Activated CD4-positive, alpha-beta memory T cell treated with anti-CD3 and anti-CD28 coated beads, Interleukin-2, amount 10 ng/mL, durations not matched to agents 7 days and 5 days (primary cell): ENCODE measurements at regions of chr11 and their contacts with region 1.

Region 1: DNA sequence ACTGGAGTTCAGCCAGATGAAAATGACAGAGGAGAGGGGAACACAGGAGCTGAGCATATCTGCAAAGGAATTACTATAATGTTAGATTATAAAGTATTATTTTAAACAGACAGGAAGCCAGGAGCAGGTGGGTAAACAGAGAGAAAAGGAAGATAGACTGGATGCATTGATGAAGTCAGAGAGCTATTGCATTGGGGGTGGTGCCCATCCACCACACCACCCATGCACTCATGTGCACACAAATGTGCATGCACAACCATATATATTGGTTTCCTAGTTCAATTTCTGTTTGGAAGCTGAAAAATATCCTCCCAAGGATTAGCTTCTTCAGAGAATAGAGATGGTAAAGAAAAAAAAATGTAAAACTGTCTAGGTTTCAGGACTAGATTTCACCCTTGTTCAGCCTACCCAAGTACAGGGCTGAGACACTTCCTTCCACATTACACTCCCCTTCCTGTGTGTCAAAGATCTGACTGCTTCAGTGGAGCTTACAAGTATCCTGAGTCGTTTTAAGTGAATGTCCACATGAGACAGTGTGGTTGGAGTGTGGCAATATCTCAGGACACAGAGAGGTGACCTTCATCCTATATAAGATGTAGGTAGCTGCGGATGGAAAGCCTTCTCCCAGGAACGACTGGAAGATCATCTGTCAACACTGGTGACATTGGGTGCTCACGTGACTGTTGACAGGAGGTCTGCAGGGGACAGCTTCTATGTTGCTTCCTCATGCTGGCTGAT is 12.2 kb upstream of the SMPD1 start:
- DNase-seq: peak; percentile 34
- H3K4me3 Mint-ChIP-seq: peak overlapping the region; percentile 24
- H3K27ac Mint-ChIP-seq: peak overlapping the region; percentile 87
- H3K4me1 Mint-ChIP-seq: peaks cover 35% of the 10 kb centered on the region
- H3K27me3 Mint-ChIP-seq: no peaks in the 10 kb centered on the region

Region 2: DNA sequence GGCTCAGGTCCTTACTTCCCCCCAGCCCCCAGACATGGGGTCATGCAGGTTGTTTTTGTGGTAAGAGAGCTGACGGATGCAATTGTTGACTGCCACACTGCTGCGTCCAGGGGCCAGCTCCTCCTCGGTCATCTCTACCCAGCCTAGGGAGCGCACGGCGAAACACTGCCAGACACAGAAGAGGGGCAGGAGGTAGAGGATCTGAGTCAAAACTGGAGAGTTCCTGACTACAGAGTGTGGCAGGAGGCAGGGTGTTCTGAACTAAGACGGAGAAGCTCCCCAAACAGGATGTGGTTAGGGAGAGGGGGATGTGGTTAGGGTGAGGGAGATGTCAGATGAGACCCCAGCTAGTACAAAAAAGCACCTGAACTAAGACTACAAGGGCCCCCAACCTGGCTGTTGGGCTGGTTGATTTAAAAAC is 24.5 kb after region 1 on chr11:
- CTCF ChIA-PET with region 1: interaction called, 23 read pairs
- POLR2A ChIA-PET with region 1: interaction called, 18 read pairs
- DNase-seq: peak; percentile 87
- H3K4me3 Mint-ChIP-seq: peak overlapping the region; percentile 67
- H3K27ac Mint-ChIP-seq: peak overlapping the region; percentile 97
- H3K4me1 Mint-ChIP-seq: peaks cover 64% of the 10 kb centered on the region
- H3K27me3 Mint-ChIP-seq: no peaks in the 10 kb centered on the region

Region 3: DNA sequence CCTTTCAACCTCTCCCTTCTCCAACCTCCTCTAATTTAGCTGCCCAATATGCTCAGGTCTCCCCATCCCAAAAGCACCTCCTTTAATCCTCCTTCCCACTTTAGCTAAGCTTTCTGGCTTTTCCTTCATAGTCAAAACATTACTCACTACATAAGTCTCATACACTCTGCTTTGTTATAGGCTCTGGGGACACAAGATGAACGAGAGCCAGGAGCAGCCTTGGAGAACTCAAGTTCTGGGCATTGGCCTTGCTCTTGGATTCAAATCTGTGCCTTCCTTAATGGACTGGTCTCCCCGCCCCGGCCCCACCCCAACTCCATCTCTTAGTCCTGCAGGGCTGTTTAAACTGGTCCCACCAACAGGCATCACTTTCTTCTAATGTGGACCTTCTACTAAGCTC is 74.1 kb after region 1 on chr11:
- CTCF ChIA-PET with region 1: interaction called, 40 read pairs
- POLR2A ChIA-PET with region 1: interaction called, 5 read pairs
- DNase-seq: no peak
- H3K4me3 Mint-ChIP-seq: no peak overlapping the region
- H3K27ac Mint-ChIP-seq: no peak overlapping the region
- H3K4me1 Mint-ChIP-seq: no peaks in the 10 kb centered on the region
- H3K27me3 Mint-ChIP-seq: no peaks in the 10 kb centered on the region

Region 4: DNA sequence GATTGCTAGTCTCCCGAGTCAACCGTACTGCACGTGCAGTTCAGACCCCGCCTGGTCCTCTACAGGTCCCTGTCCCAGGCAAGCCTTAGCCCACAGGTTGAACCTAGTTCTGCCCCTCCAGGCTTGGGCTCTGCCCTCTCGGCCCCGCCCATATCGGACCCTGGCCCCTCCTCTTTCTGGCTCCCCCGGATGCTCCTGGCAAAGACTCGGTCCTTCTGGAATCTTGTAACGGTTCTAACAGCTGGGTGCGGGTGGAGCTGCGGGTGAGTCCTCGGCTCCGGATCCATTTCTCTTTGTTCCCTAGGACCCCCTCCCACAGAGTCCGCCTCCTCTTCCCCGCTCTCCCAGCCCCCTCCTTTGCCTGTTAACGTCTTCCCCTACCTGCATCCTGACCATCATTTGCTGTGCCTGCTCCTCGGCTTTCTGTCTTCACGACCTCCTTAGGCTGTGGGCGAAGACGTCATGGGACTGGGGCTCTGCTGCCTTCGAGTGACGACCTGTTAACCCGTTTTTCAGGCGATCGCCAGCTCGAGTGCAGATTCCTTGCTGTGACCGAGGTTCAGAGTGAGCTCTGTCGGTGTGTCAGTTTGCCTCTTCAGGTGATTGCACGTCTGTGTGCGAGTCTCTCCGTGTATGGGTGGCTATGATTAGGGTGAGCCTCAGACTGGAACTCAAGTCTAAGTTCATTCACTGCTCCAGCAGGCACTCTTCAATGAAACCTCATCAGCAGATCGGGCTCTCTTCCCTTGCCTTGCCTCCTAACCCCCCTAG is 119.2 kb after region 1 on chr11 and contains the start of gene DNHD1:
- CTCF ChIA-PET with region 1: interaction called, 34 read pairs
- POLR2A ChIA-PET with region 1: interaction called, 6 read pairs
- DNase-seq: no peak
- H3K4me3 Mint-ChIP-seq: no peak within 1 kb of the TSS
- H3K27ac Mint-ChIP-seq: no peak within 1 kb of the TSS
- H3K4me1 Mint-ChIP-seq: peaks cover 4% of the 10 kb centered on the region
- H3K27me3 Mint-ChIP-seq: no peaks in the 10 kb centered on the region
- total RNA-seq, gene DNHD1: 18.5 to 19.6 TPM

Region 5: DNA sequence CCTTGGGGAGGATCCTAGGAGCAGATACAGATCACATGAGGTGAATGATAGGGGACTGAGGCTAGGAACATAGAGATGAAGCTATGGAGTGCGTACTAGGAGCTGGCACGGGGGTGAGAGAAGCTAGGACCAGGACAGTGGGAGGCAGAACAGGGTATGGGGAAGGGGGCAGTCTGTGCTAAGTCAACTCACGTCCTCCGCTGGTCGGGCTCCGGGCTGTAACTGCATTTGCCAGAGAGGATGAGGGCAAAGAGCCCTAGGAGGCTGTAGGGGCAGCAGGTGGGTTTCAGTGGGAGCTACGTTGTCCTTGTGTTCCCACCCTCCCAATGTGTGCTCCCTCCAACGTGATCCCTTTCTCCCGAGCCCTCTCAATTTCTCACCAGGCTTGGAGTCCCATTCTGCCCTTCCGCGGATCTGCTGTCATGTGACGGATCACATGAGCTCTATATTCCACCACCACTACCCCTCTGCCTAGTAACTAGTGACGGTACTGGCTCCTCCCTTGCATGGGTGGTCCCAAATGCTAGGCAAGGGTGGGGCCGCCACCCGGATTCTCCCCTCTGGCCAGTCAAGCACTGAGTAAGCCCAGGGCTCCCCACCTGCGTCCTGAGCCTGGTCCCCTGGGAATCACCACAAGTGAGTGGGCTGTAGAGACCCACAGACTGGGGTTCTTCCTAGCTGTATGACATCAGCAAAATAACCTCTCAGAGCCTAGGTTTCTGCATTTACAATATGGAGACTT is 241.1 kb after region 1 on chr11 and contains the start of gene TPP1:
- CTCF ChIA-PET with region 1: interaction called, 13 read pairs
- POLR2A ChIA-PET with region 1: interaction called, 4 read pairs
- DNase-seq: peak; percentile 92
- H3K4me3 Mint-ChIP-seq: no peak within 1 kb of the TSS
- H3K27ac Mint-ChIP-seq: no peak within 1 kb of the TSS
- H3K4me1 Mint-ChIP-seq: peaks cover 6% of the 10 kb centered on the region
- H3K27me3 Mint-ChIP-seq: no peaks in the 10 kb centered on the region
- total RNA-seq, gene TPP1: 130 to 131 TPM

Region 6: DNA sequence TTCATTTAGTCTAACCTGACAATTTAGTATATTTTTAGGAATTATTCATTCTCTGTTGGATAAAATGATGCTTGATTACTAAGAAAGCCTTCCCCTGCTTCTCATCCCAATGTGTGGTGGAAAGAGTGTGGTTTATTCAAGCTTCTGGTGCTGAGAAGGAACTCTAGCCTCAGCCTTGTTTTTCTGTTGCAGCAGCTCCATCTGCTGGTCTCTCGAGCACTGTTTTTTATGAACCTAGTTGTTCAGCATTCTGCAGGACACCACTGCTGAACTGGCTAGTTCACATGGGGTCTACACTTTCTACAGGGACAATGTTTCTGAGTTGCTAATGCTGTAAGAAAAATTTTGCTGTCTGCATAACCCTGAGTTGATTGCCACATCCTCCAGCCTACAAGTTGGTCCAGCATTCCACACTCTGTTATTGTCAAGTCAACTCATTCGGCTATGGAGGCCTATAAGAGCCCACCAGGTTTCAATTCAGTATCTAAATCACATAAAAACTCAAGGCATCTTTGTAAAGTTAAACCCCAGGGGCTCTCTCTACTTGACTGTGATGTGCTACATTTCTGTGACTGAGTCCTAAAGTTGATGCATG is 379.4 kb after region 1 on chr11:
- CTCF ChIA-PET with region 1: interaction called, 15 read pairs
- POLR2A ChIA-PET with region 1: no interaction called
- DNase-seq: peak; percentile 65
- H3K4me3 Mint-ChIP-seq: no peak overlapping the region
- H3K27ac Mint-ChIP-seq: no peak overlapping the region
- H3K4me1 Mint-ChIP-seq: no peaks in the 10 kb centered on the region
- H3K27me3 Mint-ChIP-seq: peaks cover 4% of the 10 kb centered on the region